Activated T-helper 1 cell treated with anti-CD3 and anti-CD28 coated beads, Interleukin-12 subunit alpha, Interleukin-12 subunit beta, Interleukin-2, Interleukin-4 antibody, amounts not matched to agents 30 ng/mL and 10 ng/mL and 1 ng/mL, durations not matched to agents 14 hours and 24 hours and 36 hours (primary cell): ENCODE measurements at regions of chr11 and their contacts with region 1.

Region 1: DNA sequence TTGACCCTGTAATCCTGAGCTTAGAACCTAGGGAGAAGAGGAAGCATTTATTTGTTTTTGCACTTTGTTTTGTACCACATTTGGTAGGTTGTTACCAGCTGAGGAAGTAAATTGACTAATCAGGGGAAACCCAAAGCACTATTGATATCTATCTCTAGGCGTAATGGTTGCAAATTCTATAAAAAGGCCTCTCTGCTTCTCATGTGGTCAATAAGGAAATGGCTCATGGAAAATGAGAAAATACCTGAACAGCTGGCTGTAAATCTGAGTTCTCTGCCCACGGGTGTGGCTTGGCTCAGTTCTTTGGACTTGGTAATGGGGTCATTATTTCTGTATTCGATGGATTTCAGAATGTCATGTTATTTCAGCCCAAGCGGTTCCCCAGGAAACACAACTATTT is 42.4 kb downstream of the BARX2 start:
- DNase-seq: no peak
- H3K4me3 Mint-ChIP-seq: peak overlapping the region; percentile 40
- H3K27ac Mint-ChIP-seq: peak overlapping the region; percentile 81
- H3K4me1 Mint-ChIP-seq: peaks cover 29% of the 10 kb centered on the region
- H3K27me3 Mint-ChIP-seq: no peaks in the 10 kb centered on the region

Region 2: GRCh38 chr11:129346916-129347315 is 71.1 kb before region 1 on chr11:
- intact Hi-C with region 1: no loop called
- DNase-seq: no peak
- H3K4me3 Mint-ChIP-seq: no peak overlapping the region
- H3K27ac Mint-ChIP-seq: no peak overlapping the region
- H3K4me1 Mint-ChIP-seq: no peaks in the 10 kb centered on the region
- H3K27me3 Mint-ChIP-seq: peaks cover 6% of the 10 kb centered on the region

Region 3: DNA sequence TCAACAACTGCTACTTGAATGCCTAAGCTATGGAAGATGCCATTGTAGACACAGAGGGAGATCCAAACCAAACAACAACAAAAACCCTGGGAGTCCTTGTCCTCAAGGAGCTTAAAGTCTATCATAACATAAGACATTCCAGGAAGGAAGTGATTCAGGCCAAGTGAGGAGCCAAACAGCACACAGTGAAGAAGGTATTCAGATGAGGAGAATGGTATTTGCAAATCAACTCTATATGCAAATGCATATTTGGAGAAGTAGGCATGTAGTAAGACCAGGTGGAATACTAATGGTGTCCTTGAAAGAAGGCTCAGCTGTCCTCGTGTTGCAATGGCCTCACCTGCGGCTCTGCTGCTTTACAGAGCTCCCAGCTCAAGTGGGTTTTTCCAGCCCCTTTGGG is 15.3 kb before region 1 on chr11:
- intact Hi-C with region 1: no loop called
- DNase-seq: no peak
- H3K4me3 Mint-ChIP-seq: no peak overlapping the region
- H3K27ac Mint-ChIP-seq: no peak overlapping the region
- H3K4me1 Mint-ChIP-seq: no peaks in the 10 kb centered on the region
- H3K27me3 Mint-ChIP-seq: peaks cover 7% of the 10 kb centered on the region

Region 4: GRCh38 chr11:129434641-129435498 is 16.8 kb after region 1 on chr11:
- intact Hi-C with region 1: loop called (anchors 1 kb)
- DNase-seq: no peak
- H3K4me3 Mint-ChIP-seq: no peak overlapping the region
- H3K27ac Mint-ChIP-seq: peak overlapping the region; percentile 2
- H3K4me1 Mint-ChIP-seq: peaks cover 34% of the 10 kb centered on the region
- H3K27me3 Mint-ChIP-seq: peaks cover 6% of the 10 kb centered on the region